SK-N-SH (cell line): ENCODE measurements at regions of chr14 and their contacts with region 1.

Region 1: DNA sequence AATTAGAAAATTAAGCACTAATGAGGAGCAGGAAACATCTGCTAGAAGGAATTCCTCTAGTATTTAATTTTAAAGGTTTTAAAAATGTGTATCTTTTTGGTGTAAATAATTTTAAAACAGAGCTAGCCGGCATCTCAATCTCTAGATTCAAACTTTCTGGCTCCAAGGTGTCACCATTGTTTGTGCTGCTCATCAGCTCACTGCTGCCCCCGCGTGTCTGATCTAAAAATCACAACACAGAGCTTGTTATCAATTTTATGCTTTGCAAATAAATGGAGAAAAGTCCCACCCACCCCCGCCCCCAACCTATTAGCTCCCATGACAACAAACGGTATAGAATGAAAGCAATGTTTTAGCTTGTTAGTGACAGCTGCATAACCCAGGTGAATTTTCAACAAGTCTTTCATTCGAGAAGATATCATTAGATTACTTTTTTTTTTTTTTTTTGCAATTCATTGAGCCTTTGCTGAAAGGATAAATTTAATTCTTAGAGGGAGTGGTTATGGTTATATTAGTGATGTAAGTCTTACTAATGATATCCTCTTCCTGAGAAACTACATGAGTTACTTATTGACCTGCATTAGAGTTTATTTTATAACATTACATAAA is 11.3 kb upstream of the ABHD12B start:
- DNase-seq: peak; percentile 82
- H3K4me3 ChIP-seq: peak overlapping the region in 1 of 2 experiments; percentile 47; a peak in 2 of 4 replicates
- H3K27ac ChIP-seq: no peak overlapping the region
- H3K4me1 ChIP-seq: peaks cover 4 to 5% of the 10 kb centered on the region in 2 experiments; a peak in 2 of 4 replicates
- H3K27me3 ChIP-seq: no peaks in the 10 kb centered on the region
- CTCF ChIP-seq: peak; percentile 67
- EP300 ChIP-seq: no peak
- RAD21 ChIP-seq: peak; percentile 84

Region 2: GRCh38 chr14:50741571-50741970 is 119.0 kb before region 1 on chr14:
- CTCF ChIA-PET with region 1: no interaction called
- POLR2A ChIA-PET with region 1: no interaction called
- DNase-seq: no peak
- H3K4me3 ChIP-seq: no peak overlapping the region
- H3K27ac ChIP-seq: peak overlapping the region; percentile 31 to 44; a peak in 2 of 4 replicates
- H3K4me1 ChIP-seq: peaks cover 0 to 6% of the 10 kb centered on the region in 2 experiments; a peak in 1 of 4 replicates
- H3K27me3 ChIP-seq: no peaks in the 10 kb centered on the region
- CTCF ChIP-seq: no peak
- EP300 ChIP-seq: no peak
- RAD21 ChIP-seq: no peak

Region 3: GRCh38 chr14:50778721-50779483 is 81.7 kb before region 1 on chr14:
- CTCF ChIA-PET with region 1: interaction called, 21 read pairs
- POLR2A ChIA-PET with region 1: no interaction called
- DNase-seq: no peak
- H3K4me3 ChIP-seq: no peak overlapping the region
- H3K27ac ChIP-seq: peak overlapping the region; percentile 6 to 44
- H3K4me1 ChIP-seq: peaks cover 0 to 21% of the 10 kb centered on the region in 2 experiments; a peak in 3 of 4 replicates
- H3K27me3 ChIP-seq: no peaks in the 10 kb centered on the region
- CTCF ChIP-seq: no peak
- EP300 ChIP-seq: no peak
- RAD21 ChIP-seq: no peak

Region 4: GRCh38 chr14:50785457-50786063 is 75.0 kb before region 1 on chr14:
- CTCF ChIA-PET with region 1: interaction called, 10 read pairs
- POLR2A ChIA-PET with region 1: no interaction called
- DNase-seq: no peak
- H3K4me3 ChIP-seq: no peak overlapping the region
- H3K27ac ChIP-seq: peak overlapping the region in 1 of 2 experiments; percentile 47; a peak in 2 of 4 replicates
- H3K4me1 ChIP-seq: peaks cover 10 to 21% of the 10 kb centered on the region in 2 experiments; a peak in 2 of 4 replicates
- H3K27me3 ChIP-seq: no peaks in the 10 kb centered on the region
- CTCF ChIP-seq: no peak
- EP300 ChIP-seq: no peak
- RAD21 ChIP-seq: no peak

Region 5: DNA sequence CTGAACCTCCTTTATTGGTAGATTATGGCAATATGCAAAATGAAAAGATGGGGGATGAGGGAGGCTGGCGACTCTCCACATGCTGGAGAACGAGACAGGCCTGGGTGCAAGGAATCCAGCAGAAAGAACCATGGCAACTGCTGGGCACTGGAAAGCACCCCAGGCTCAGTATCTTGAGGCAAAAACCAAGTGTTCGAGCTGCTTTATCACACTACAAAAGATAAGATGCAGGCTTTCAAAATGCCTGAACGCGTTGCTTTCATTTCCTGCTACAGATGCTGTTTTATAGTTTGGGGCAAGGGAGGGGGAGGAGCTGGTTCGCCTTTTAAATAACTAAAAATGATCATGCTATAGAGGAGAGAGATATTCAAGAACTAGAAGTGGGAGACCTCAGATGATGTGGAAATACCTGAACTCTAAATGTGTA is 68.5 kb before region 1 on chr14:
- CTCF ChIA-PET with region 1: interaction called, 23 read pairs
- POLR2A ChIA-PET with region 1: no interaction called
- DNase-seq: peak; percentile 29
- H3K4me3 ChIP-seq: no peak overlapping the region
- H3K27ac ChIP-seq: no peak overlapping the region
- H3K4me1 ChIP-seq: peaks cover 17 to 20% of the 10 kb centered on the region in 2 experiments
- H3K27me3 ChIP-seq: no peaks in the 10 kb centered on the region
- CTCF ChIP-seq: no peak
- EP300 ChIP-seq: no peak
- RAD21 ChIP-seq: no peak

Region 6: DNA sequence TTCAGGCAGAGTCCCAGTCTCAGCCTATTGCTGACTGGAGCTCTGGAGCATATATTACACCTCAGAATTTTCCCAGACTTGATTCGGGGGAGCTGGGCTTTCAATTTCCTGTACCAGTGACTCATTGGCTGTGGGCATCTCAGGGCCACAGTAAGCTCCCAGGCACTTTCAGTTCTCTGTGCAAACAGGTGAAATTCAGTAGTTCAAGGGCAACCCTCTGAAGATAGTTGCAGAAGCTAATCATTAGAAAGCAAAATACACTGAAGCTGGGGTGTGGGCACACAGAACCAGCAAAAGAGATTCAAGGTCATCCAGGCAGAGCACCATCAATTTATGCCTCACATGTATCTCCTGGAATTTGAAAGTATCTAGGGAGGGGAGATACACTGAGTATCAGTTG is 21.5 kb before region 1 on chr14:
- CTCF ChIA-PET with region 1: interaction called, 13 read pairs
- POLR2A ChIA-PET with region 1: no interaction called
- DNase-seq: no peak
- H3K4me3 ChIP-seq: no peak overlapping the region
- H3K27ac ChIP-seq: no peak overlapping the region
- H3K4me1 ChIP-seq: no peaks in the 10 kb centered on the region
- H3K27me3 ChIP-seq: no peaks in the 10 kb centered on the region
- CTCF ChIP-seq: no peak
- EP300 ChIP-seq: no peak
- RAD21 ChIP-seq: no peak

Region 7: DNA sequence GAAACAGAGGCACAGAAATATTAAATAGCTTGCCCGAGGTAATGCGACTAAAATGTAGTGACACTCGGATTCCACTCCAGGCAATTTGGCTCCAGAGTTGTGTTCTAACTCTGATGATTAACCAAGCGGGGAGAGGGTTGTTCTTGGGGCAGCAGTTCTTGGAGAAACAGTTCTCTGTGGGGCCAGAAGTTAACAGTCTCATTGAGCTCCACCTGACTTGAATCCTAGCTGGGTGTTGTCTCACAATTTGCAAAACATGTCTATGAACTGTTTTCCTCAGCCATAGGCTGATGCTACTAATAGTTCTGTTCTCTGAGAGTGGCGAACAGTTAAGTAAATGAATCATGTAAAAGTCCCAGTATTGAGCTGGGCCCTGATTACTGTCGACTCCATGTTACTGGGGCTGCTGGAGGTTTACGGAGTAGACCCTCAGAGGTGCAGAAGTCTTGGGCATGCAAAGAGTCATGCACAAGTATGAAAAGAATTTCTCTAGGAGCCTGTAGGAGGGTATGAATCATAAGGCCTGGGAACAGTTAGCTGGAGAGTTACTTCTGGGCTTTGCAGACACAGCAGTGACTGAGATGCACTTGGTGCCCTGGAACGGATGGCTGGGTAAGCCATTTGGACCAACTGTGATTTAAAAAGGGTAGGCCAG is 14.2 kb before region 1 on chr14:
- CTCF ChIA-PET with region 1: interaction called, 20 read pairs
- POLR2A ChIA-PET with region 1: no interaction called
- DNase-seq: no peak
- H3K4me3 ChIP-seq: no peak overlapping the region
- H3K27ac ChIP-seq: peak overlapping the region in 1 of 2 experiments; percentile 84; a peak in 2 of 4 replicates
- H3K4me1 ChIP-seq: peaks cover 0 to 24% of the 10 kb centered on the region in 2 experiments; a peak in 2 of 4 replicates
- H3K27me3 ChIP-seq: no peaks in the 10 kb centered on the region
- CTCF ChIP-seq: no peak
- EP300 ChIP-seq: peak in 1 of 2 experiments; percentile 55; a peak in 1 of 4 replicates
- RAD21 ChIP-seq: no peak

Region 8: DNA sequence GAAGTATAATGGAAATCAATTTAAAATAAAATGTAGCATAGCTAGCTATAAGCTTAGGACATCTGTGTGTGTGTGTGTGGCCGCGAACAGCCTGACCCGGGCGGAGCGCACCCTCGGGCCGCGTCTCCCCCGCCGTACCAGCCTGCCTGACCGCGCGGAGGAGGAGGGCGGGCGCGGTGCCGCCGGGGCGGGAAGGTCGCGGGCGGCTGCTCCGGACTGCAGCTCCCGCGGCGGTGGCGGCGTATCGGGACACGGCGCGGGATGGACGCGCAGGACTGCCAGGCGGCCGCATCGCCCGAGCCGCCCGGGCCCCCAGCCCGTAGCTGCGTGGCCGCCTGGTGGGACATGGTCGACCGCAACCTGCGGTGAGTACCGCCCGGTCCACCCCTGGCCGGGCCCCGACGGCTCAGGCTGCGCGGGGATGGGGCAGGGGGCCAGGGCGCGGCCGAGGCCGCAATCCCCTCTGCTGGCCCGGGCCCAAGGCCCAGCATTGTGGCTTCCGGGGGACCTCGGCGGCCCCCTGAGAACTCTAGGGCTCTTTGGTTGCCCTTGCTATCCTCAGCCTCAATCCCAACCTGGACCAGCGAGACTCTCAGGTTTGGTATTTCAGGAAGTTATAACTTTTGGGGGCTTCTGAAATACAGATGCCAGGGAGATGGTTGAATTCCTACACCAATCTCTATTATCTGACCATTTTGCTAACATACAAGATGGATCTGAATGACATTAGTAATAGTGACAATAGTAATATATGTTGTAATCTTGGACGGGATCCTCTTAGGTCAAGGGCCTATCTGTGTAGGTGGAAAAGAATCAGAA is 11.5 kb after region 1 on chr14 and contains the start of gene ABHD12B:
- CTCF ChIA-PET with region 1: interaction called, 14 read pairs
- POLR2A ChIA-PET with region 1: no interaction called
- DNase-seq: peak; percentile 73
- H3K4me3 ChIP-seq: no peak within 1 kb of the TSS
- H3K27ac ChIP-seq: no peak within 1 kb of the TSS
- H3K4me1 ChIP-seq: no peaks in the 10 kb centered on the region; a peak in 1 of 4 replicates
- H3K27me3 ChIP-seq: no peaks in the 10 kb centered on the region
- CTCF ChIP-seq: no peak
- EP300 ChIP-seq: no peak
- RAD21 ChIP-seq: no peak
- polyA plus RNA-seq, gene ABHD12B: not detected in 2 replicates

Region 9: DNA sequence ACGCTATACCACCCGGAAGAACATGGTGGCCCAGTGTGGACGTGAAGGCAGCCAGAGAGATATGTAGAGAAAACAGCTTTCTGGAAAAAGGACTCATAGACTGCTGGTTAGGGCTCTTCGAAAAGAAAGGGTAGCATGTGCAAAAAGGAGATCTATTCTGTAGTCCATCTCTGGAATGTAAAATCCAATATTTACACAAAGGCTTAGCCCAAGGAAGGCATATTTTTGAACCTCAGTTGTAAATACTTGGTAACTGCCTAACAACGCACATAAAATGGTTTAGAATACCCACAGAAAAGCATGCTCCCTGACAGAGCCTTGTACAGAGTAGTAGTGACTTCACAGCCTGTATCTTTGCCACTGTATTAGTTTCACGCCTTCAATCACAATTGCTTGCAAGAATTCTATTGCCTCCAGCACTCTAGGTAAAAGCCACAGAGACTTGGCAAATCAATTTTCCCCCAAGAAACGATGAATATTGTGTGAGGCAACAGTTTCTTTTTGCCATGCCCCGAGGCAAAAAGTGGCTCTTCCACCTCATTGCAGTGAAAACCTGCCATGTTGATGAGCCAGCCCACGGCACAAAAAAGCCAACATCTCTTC is 175.1 kb after region 1 on chr14:
- CTCF ChIA-PET with region 1: no interaction called
- POLR2A ChIA-PET with region 1: no interaction called
- DNase-seq: no peak
- H3K4me3 ChIP-seq: no peak overlapping the region
- H3K27ac ChIP-seq: no peak overlapping the region
- H3K4me1 ChIP-seq: no peaks in the 10 kb centered on the region
- H3K27me3 ChIP-seq: no peaks in the 10 kb centered on the region
- CTCF ChIP-seq: no peak
- EP300 ChIP-seq: no peak
- RAD21 ChIP-seq: no peak